Activated CD4-positive, alpha-beta memory T cell treated with anti-CD3 and anti-CD28 coated beads for 36 hours (primary cell): ENCODE measurements at regions of chr11 and their contacts with region 1.

Region 1: GRCh38 chr11:112555491-112556364 is 295.1 kb upstream of the PLET1 start:
- DNase-seq: peak; percentile 82
- H3K4me3 Mint-ChIP-seq: no peak overlapping the region
- H3K27ac Mint-ChIP-seq: no peak overlapping the region
- H3K4me1 Mint-ChIP-seq: peaks cover 4% of the 10 kb centered on the region
- H3K27me3 Mint-ChIP-seq: peaks cover 1% of the 10 kb centered on the region

Region 2: GRCh38 chr11:112219476-112220232 is 336.1 kb before region 1 on chr11:
- CTCF ChIA-PET with region 1: interaction called, 20 read pairs
- POLR2A ChIA-PET with region 1: no interaction called
- intact Hi-C with region 1: loop called (anchors 10 kb)
- DNase-seq: peak; percentile 25
- H3K4me3 Mint-ChIP-seq: no peak overlapping the region
- H3K27ac Mint-ChIP-seq: no peak overlapping the region
- H3K4me1 Mint-ChIP-seq: no peaks in the 10 kb centered on the region
- H3K27me3 Mint-ChIP-seq: no peaks in the 10 kb centered on the region

Region 3: DNA sequence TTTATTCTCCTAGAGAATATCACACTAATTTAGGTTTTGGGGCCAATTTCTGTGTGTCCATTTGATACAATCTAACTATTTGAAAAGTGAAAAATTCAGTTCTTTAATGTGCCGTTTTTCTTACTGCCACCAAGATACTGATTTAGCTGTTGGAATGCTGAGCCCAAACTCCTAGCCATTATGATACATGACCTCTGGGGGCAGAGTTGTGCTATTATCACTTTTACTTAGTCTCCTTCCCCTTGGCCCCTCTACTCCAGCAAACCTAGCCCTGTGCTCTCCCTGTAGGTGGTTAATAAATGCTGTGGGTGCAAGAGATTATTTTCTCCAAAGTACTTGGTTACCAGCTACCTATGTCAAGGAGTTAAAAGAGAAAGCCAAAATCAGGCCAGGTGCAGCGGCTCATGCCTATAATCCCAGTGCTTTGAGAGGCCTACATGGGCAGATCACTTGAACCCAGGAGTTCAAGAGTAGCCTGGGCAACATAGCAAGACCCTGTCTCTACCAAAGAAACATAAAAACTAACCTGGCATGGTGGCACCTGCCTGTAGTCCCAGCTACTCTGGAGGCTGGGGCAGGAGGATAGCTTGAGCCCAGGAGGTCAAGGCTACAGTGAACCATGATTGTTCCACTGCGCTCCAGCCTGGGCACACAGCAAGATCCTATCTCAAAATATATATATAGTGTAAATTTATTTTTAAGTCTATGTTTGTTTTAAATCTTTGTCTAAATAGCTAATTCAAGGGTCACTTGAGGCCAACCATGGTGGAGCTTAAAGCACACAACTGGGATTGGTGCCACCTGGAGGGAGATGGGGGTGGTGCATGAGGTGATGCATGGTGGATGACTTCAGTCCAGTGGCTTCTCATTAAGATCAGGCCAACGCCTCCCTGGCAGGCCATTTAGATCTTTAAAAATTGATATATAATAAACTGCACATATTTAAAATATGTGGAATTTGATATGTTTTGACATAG is 101.8 kb before region 1 on chr11:
- CTCF ChIA-PET with region 1: interaction called, 11 read pairs
- POLR2A ChIA-PET with region 1: no interaction called
- intact Hi-C with region 1: loop called (anchors 5 kb)
- DNase-seq: peak; percentile 60
- H3K4me3 Mint-ChIP-seq: no peak overlapping the region
- H3K27ac Mint-ChIP-seq: no peak overlapping the region
- H3K4me1 Mint-ChIP-seq: no peaks in the 10 kb centered on the region
- H3K27me3 Mint-ChIP-seq: no peaks in the 10 kb centered on the region

Region 4: GRCh38 chr11:112459001-112459400 is 96.7 kb before region 1 on chr11:
- CTCF ChIA-PET with region 1: interaction called, 11 read pairs
- POLR2A ChIA-PET with region 1: no interaction called
- intact Hi-C with region 1: loop called (anchors 5 kb)
- DNase-seq: no peak
- H3K4me3 Mint-ChIP-seq: peak overlapping the region; percentile 15
- H3K27ac Mint-ChIP-seq: no peak overlapping the region
- H3K4me1 Mint-ChIP-seq: no peaks in the 10 kb centered on the region
- H3K27me3 Mint-ChIP-seq: no peaks in the 10 kb centered on the region

Region 5: DNA sequence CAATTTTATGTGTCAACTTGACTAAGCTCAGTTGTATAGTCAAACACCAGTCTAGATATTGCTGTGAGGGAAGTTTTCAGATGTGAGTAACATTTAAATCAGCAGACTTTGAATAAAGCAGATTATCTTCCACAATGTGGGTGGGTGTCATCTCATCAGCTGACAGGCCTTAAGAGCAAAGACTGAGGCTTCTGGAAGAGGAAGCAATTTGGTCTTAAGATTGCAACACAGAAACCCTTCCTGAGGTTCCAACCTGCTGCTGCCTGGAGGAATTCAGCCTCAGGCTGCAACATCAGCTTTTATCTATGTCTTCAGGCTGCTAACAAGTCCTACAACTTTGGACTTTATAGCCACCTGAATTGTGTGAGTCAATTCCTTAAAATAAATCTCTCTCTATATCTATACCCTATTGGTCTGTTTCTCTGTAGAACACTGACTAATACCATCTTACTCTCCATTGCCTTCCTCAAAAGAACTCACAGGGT is 17.8 kb before region 1 on chr11:
- CTCF ChIA-PET with region 1: interaction called, 18 read pairs
- POLR2A ChIA-PET with region 1: no interaction called
- intact Hi-C with region 1: no loop called
- DNase-seq: no peak
- H3K4me3 Mint-ChIP-seq: no peak overlapping the region
- H3K27ac Mint-ChIP-seq: no peak overlapping the region
- H3K4me1 Mint-ChIP-seq: peaks cover 42% of the 10 kb centered on the region
- H3K27me3 Mint-ChIP-seq: peaks cover 5% of the 10 kb centered on the region

Region 6: GRCh38 chr11:112588252-112588694 is 32.5 kb after region 1 on chr11:
- CTCF ChIA-PET with region 1: interaction called, 14 read pairs
- POLR2A ChIA-PET with region 1: no interaction called
- intact Hi-C with region 1: no loop called
- DNase-seq: peak; percentile 50
- H3K4me3 Mint-ChIP-seq: no peak overlapping the region
- H3K27ac Mint-ChIP-seq: no peak overlapping the region
- H3K4me1 Mint-ChIP-seq: peaks cover 2% of the 10 kb centered on the region
- H3K27me3 Mint-ChIP-seq: no peaks in the 10 kb centered on the region